SK-N-SH (cell line): ENCODE measurements at regions of chr6 and their contacts with region 1.

Region 1: GRCh38 chr6:31597006-31597405 is 4.2 kb upstream of the NCR3 start:
- DNase-seq: peak; percentile 70
- H3K4me3 ChIP-seq: no peak overlapping the region; a peak in 1 of 4 replicates
- H3K27ac ChIP-seq: no peak overlapping the region
- H3K4me1 ChIP-seq: no peaks in the 10 kb centered on the region
- H3K27me3 ChIP-seq: no peaks in the 10 kb centered on the region
- CTCF ChIP-seq: peak; percentile 59
- EP300 ChIP-seq: no peak
- RAD21 ChIP-seq: peak; percentile 49

Region 2: GRCh38 chr6:31272436-31272835 is 324.6 kb before region 1 on chr6:
- CTCF ChIA-PET with region 1: no interaction called
- POLR2A ChIA-PET with region 1: no interaction called
- DNase-seq: no peak
- H3K4me3 ChIP-seq: peak overlapping the region; percentile 89 to 90
- H3K27ac ChIP-seq: peak overlapping the region in 1 of 2 experiments; percentile 72; a peak in 1 of 4 replicates
- H3K4me1 ChIP-seq: peaks cover 0 to 10% of the 10 kb centered on the region in 2 experiments; a peak in 1 of 4 replicates
- H3K27me3 ChIP-seq: peaks cover 7% of the 10 kb centered on the region; the same call in 1 of the 2 replicates
- CTCF ChIP-seq: no peak
- EP300 ChIP-seq: no peak
- RAD21 ChIP-seq: no peak

Region 3: DNA sequence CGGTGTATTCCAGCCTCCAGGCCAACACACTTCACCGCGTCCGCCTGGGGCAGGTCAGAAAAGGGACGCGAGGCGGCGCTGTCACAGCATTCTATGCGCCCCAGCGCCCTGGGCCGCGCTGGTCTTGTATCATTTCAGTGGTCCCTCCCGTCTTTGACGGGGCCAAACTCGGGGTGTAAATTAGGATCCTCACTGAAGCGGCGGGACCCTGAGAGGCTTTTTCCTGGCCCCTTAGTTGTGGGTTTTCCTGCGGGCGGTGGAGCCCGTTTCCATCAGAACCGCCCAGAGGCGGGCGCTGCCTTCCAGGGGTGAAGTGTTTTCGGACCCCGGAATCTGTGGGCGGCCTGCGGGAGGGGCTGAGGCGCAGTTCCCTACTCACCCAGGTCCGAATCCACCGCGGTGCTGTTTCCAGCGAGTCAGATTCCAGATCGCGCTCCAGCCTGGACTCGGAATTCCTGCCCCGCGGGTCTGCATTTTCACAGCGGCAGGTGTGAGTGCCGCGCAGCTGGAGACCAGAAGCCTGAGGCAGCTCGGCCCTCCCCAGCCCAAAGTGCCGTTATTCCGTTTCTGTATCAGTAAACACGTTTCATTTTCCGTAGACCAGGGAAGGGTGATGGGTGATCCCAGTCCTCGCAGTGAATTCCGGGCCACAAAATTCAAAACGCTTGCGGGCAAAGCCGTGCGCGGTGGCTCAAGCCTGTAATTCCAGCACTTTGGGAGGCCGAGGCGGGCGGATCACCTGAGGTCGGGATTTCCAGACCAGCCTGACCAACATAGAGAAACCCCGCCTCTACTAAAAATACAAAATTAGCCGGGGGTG is 102.9 kb before region 1 on chr6:
- CTCF ChIA-PET with region 1: interaction called, 40 read pairs
- POLR2A ChIA-PET with region 1: no interaction called
- DNase-seq: peak; percentile 62
- H3K4me3 ChIP-seq: peak overlapping the region; percentile 49 to 80
- H3K27ac ChIP-seq: peak overlapping the region in 1 of 2 experiments; percentile 67; a peak in 2 of 4 replicates
- H3K4me1 ChIP-seq: peaks cover 3 to 7% of the 10 kb centered on the region in 2 experiments; a peak in 2 of 4 replicates
- H3K27me3 ChIP-seq: no peaks in the 10 kb centered on the region; the same call in 1 of the 2 replicates
- CTCF ChIP-seq: peak; percentile 80
- EP300 ChIP-seq: no peak
- RAD21 ChIP-seq: peak; percentile 61

Region 4: GRCh38 chr6:31541658-31542521 is 55.1 kb before region 1 on chr6 and contains the start of gene DDX39B:
- CTCF ChIA-PET with region 1: interaction called, 301 read pairs
- POLR2A ChIA-PET with region 1: interaction called, 18 read pairs
- DNase-seq: peak; percentile 87
- H3K4me3 ChIP-seq: peak within 1 kb of the TSS; percentile 74 to 91
- H3K27ac ChIP-seq: peak within 1 kb of the TSS; percentile 95 to 97
- H3K4me1 ChIP-seq: peaks cover 15 to 28% of the 10 kb centered on the region in 2 experiments; a peak in 3 of 4 replicates
- H3K27me3 ChIP-seq: no peaks in the 10 kb centered on the region
- CTCF ChIP-seq: no peak
- EP300 ChIP-seq: peak; percentile 29; a peak in 2 of 4 replicates
- RAD21 ChIP-seq: no peak
- polyA plus RNA-seq, gene DDX39B: 502 and 556 TPM in 2 replicates

Region 5: GRCh38 chr6:31568537-31568961 is 28.5 kb before region 1 on chr6:
- CTCF ChIA-PET with region 1: interaction called, 312 read pairs
- POLR2A ChIA-PET with region 1: no interaction called
- DNase-seq: no peak
- H3K4me3 ChIP-seq: no peak overlapping the region
- H3K27ac ChIP-seq: no peak overlapping the region
- H3K4me1 ChIP-seq: no peaks in the 10 kb centered on the region
- H3K27me3 ChIP-seq: no peaks in the 10 kb centered on the region
- CTCF ChIP-seq: no peak
- EP300 ChIP-seq: no peak
- RAD21 ChIP-seq: no peak

Region 6: DNA sequence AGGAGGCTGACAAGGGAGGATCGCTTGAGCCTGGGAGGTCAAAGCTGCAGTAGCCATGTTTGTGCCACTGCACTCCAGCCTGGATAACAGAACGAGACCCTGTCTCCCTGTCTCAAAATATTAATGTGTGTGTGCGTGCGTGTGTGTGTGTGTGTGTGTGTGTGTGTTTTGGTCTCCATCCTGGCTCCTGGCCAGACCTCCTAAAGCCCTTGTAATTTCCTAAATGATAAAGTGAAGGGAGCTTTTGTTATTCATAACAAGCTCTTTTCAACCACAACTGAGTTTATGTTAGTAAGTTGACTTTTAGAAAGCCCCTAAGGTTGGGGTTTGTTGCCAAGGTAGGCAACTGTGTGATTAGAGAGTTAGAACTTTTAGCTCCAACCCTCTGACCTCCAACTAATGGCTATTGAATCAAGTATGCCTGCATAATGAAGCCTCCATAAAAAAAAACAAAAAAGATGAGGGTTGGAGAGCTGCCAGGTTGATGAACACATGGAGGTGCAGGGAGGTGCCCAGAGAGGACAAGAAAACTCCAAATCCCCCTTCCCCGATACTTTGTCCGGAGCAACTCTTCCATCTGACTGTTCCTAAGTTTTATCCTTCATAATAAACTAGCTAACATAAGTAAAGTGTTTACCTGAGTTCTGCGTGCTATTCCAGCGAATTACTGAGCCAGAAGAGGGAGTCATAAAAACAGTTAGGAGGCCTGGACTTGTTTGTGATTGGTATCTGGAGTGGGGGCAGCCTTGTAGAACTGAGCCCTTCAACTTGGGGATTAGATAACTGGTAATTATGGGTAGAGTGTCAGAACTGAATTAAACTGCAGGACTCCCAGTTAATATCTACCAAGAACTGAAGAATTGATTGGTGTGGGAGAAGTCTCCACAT is 12.8 kb after region 1 on chr6:
- CTCF ChIA-PET with region 1: interaction called, 35 read pairs
- POLR2A ChIA-PET with region 1: no interaction called
- DNase-seq: no peak
- H3K4me3 ChIP-seq: no peak overlapping the region
- H3K27ac ChIP-seq: no peak overlapping the region
- H3K4me1 ChIP-seq: no peaks in the 10 kb centered on the region; a peak in 1 of 4 replicates
- H3K27me3 ChIP-seq: no peaks in the 10 kb centered on the region
- CTCF ChIP-seq: no peak
- EP300 ChIP-seq: no peak
- RAD21 ChIP-seq: no peak